H1 (cell line): ENCODE measurements at regions of chr7 and their contacts with region 1.

Region 1: DNA sequence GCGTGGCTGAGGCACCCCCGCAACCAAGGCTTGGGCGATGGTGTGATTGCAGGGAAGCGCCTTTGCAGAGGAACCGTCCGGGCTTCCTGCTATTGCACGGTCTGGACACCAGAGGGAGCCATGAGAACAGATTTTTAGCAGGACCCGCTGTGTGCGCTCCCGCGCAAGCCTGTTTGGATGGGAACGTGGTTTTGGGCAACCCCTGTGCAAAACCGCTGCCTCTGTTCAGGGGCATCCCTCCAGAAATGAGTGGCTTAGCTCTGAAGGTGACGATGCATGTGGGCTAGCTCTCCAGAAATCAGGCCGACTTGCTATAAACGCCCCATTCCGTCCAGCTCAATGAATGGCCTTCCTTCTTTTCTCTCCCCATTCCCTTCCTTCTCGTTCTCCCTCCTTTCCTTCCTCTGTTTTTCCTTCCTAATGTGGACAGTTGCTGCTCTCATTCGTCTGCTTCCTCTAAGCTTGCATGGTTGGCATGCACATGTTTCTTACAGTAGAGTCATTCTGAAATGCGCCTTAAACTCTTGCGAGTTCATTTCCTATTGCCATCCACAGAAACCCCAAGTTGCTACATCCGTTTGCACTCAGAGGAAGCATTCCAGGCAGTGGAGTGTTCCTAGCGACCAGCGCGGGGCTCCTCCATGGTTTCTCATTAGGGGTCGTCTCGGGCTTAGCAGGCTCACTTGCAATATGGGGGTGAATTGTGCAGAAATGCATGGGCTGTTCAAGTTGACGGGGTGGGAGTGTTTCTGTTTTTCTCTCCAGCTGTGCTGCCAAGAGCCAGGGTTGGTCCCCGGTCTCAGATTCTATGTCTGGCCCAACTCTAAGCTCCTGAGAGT is 302.5 kb upstream of the GALNT17 start:
- DNase-seq: peak; percentile 70 to 93
- H3K4me3 ChIP-seq: no peak overlapping the region
- H3K27ac ChIP-seq: no peak overlapping the region
- H3K4me1 ChIP-seq: peaks cover 0 to 7% (median 4%) of the 10 kb centered on the region in 4 experiments; a peak in 5 of 7 replicates
- H3K27me3 ChIP-seq: no peaks in the 10 kb centered on the region
- CTCF ChIP-seq: peak; percentile 82 to 96 (median 87)
- EP300 ChIP-seq: no peak
- POLR2A ChIP-seq: 0 out of 3 replicates have a peak, but pooled peaks of 1 of the 2 experiments have one; percentile 30
- RAD21 ChIP-seq: peak; percentile 97 to 98

Region 2: DNA sequence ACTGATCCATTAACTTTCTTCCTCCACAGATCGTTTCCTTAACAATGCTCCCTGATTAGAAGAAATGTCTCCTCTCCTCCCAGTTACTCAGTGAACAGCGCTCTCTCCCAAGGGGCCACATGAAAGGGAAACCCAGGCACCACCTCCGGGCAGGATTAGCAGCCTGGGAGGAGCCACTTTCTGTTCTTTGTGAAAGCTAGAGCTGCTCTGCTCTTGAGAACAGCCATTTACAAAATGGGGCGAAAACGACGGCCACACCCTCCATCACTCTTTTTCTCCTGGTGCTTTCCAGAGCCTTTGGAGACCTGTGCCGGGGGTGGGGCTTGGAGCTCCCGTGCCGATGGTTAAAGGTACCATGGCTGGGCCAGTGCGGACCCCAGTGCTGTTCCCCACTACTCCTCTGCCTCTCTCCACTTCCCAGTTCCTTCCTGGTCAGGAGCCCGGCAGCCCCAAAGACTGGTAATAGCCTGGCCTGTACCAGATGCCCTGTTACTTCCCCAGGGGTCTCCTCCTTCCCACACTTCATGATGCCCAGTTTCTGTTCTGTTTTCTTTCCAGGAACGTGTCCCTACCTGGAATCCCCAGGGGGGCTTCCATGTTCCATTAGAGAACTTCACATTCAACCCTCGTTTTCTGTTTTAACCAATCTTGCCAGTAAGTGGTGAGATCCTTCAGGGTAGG is 100.4 kb before region 1 on chr7:
- CTCF ChIA-PET with region 1: no interaction called
- POLR2A ChIA-PET with region 1: no interaction called
- DNase-seq: peak; percentile 61 to 71
- H3K4me3 ChIP-seq: peak overlapping the region in 2 of 4 experiments; percentile 15 to 16; a peak in 3 of 8 replicates
- H3K27ac ChIP-seq: peak overlapping the region; percentile 39; the same call in 1 of the 2 replicates
- H3K4me1 ChIP-seq: peaks cover 6 to 32% (median 27%) of the 10 kb centered on the region in 4 experiments
- H3K27me3 ChIP-seq: no peaks in the 10 kb centered on the region
- CTCF ChIP-seq: no peak
- EP300 ChIP-seq: peak; percentile 16 to 37; a peak in 2 of 3 replicates
- POLR2A ChIP-seq: peak in 1 of 2 experiments; percentile 35; a peak in 1 of 3 replicates
- RAD21 ChIP-seq: no peak

Region 3: DNA sequence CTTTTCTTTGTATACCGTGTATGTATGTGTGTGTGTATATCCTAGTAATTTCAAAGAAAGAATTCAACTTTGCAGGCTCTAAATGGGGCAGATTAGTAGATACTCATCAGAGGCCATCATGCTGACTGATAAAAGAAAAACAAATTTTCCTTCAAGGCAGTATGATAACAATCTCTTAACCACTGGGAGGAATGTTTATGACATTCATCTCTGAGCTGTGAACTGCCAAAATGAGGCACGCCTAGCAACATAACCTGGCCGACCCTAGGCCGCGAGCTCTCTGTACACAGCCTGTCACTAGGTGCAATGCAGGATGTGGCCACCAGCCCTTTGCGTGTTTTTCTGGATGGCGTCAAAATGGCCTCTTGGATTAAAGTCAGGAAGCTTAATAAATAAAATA is 41.2 kb before region 1 on chr7:
- CTCF ChIA-PET with region 1: no interaction called
- POLR2A ChIA-PET with region 1: no interaction called
- DNase-seq: no peak
- H3K4me3 ChIP-seq: no peak overlapping the region
- H3K27ac ChIP-seq: no peak overlapping the region
- H3K4me1 ChIP-seq: no peaks in the 10 kb centered on the region; a peak in 1 of 7 replicates
- H3K27me3 ChIP-seq: no peaks in the 10 kb centered on the region
- CTCF ChIP-seq: peak in 1 of 3 experiments; percentile 23; a peak in 1 of 4 replicates
- EP300 ChIP-seq: no peak
- POLR2A ChIP-seq: no peak
- RAD21 ChIP-seq: no peak

Region 4: DNA sequence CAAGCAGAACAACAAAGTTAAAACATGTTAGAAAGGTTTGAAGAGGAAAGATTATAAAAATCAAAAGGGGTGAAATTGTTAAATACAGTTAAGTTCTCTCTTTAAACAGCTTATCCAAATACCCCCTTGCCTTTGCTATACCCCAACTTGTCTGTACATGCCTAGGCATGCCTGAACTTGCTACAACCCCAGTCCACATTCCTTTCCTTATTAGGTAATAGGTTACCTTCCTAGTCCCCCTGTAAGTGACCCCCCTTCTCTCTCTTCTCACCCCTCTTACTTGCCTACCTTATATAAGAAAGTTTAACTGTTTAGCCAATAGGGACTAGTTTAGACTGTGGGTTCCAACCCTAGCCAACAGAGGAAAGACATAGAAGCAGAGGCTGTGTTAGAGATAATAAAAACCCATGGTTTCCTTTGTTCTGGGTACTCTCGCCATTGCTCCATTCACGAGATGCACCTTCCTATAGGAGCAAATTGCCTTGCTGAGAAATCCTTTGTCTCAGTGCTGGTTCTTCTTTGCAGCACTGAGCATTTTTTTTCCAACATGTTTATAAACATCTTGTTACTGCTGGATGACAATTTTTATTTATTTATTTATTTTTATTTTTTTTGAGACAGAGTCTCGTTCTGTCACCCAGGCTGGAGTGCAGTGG is 20.3 kb after region 1 on chr7:
- CTCF ChIA-PET with region 1: interaction called, 18 read pairs
- POLR2A ChIA-PET with region 1: no interaction called
- DNase-seq: no peak
- H3K4me3 ChIP-seq: no peak overlapping the region
- H3K27ac ChIP-seq: peak overlapping the region; percentile 91
- H3K4me1 ChIP-seq: peaks cover 0 to 4% (median under 1%) of the 10 kb centered on the region in 4 experiments; a peak in 3 of 7 replicates
- H3K27me3 ChIP-seq: no peaks in the 10 kb centered on the region
- CTCF ChIP-seq: no peak
- EP300 ChIP-seq: peak in 1 of 2 experiments; percentile 95; a peak in 1 of 3 replicates
- POLR2A ChIP-seq: peak in 1 of 2 experiments; percentile 63; a peak in 2 of 3 replicates
- RAD21 ChIP-seq: no peak

Region 5: DNA sequence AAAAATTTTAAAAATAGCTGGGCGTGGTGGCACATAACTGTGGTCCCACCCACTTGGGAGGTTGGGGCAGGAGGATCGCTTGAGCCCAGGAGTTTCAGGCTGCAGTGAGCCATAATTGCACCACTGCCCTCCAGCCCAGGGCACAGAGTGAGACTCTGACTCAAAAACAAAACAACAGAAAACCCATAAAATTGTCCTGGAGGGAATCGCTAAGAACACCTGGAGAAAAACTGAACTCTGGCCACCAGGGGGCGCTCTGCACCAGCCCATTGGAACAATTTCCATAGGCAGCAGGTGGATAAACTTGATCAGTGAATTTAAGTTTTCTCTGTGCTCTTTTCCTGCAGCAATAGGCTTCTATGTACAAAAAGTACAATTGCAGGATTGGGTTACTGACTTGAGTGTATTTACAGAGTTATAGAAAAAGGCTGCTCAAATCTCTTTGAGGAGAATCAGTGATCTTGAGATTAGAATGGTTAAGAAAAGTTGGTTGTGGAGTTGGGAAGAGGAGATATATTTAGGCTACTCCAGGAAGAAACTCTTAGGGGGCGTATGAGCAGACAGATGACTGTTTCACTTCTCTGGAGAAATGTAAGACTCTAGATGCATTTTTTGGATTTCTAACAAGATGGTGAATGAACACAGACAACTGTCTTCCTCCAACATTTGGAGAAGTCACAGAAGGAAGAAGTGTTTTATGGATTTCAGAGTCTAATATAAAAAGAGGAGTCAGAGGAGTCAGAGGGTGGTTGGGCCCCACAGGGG is 27.6 kb after region 1 on chr7:
- CTCF ChIA-PET with region 1: interaction called, 11 read pairs
- POLR2A ChIA-PET with region 1: no interaction called
- DNase-seq: peak; percentile 79 to 98
- H3K4me3 ChIP-seq: peak overlapping the region in 1 of 4 experiments; percentile 33; a peak in 1 of 8 replicates
- H3K27ac ChIP-seq: no peak overlapping the region; the same call in 1 of the 2 replicates
- H3K4me1 ChIP-seq: peaks cover 0 to 9% (median 3%) of the 10 kb centered on the region in 4 experiments; a peak in 4 of 7 replicates
- H3K27me3 ChIP-seq: no peaks in the 10 kb centered on the region
- CTCF ChIP-seq: peak; percentile 63 to 78 (median 73)
- EP300 ChIP-seq: no peak
- POLR2A ChIP-seq: no peak
- RAD21 ChIP-seq: peak; percentile 99 to 100

Region 6: GRCh38 chr7:71511361-71511807 is 681.9 kb after region 1 on chr7:
- CTCF ChIA-PET with region 1: interaction called, 15 read pairs
- POLR2A ChIA-PET with region 1: no interaction called
- DNase-seq: peak; percentile 15 to 51
- H3K4me3 ChIP-seq: no peak overlapping the region
- H3K27ac ChIP-seq: no peak overlapping the region
- H3K4me1 ChIP-seq: peaks cover 2 to 7% (median 6%) of the 10 kb centered on the region in 4 experiments; a peak in 5 of 7 replicates
- H3K27me3 ChIP-seq: no peaks in the 10 kb centered on the region
- CTCF ChIP-seq: peak; percentile 6 to 98 (median 68)
- EP300 ChIP-seq: no peak
- POLR2A ChIP-seq: no peak
- RAD21 ChIP-seq: peak; percentile 73 to 83

Region 7: DNA sequence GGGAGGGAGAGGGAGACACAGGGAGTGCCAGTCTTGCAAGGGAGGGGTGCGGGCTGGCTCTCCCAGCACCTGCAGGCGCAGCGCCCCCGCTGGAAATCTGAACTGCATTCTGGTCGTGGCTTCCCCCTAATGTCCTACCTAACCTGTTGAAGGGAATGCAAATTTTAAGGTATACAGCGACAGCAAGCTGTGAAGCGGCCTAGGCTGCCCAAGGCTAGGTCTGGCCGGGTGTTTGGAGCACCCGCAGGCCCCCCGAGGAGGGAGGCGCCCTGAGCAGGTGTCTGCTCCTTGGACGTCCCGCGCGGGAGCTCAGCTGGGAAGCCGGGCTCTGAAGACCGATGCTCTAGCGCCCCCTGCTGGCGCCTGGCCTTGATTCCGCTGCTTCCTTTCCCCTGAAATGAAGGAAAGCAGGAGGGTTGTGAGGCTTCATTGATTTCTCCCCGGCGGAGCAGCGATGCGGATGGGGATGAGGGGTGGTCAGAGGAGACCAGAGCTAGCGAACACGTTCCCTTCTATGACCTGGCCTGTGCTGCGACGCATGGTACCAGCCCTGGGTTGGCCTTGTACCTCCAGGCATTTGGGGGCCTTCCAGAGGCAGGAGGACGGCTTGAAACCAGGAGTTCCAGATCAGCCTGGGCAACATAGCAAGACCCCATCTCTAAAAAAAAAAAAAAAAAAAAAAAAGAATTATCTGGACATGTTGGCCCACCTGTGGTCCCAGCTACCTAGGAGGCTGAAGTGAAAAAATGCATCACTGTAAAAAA is 903.8 kb after region 1 on chr7:
- CTCF ChIA-PET with region 1: interaction called, 40 read pairs
- POLR2A ChIA-PET with region 1: no interaction called
- DNase-seq: peak; percentile 87 to 99
- H3K4me3 ChIP-seq: peak overlapping the region in 3 of 4 experiments; percentile 34 to 57 (median 53); a peak in 7 of 8 replicates
- H3K27ac ChIP-seq: no peak overlapping the region
- H3K4me1 ChIP-seq: peaks cover 0 to 4% (median 1%) of the 10 kb centered on the region in 4 experiments; a peak in 4 of 7 replicates
- H3K27me3 ChIP-seq: no peaks in the 10 kb centered on the region
- CTCF ChIP-seq: peak; percentile 83 to 85 (median 83)
- EP300 ChIP-seq: peak in 1 of 2 experiments; percentile 46; a peak in 1 of 3 replicates
- POLR2A ChIP-seq: no peak
- RAD21 ChIP-seq: peak; percentile 90 to 94

Region 8: DNA sequence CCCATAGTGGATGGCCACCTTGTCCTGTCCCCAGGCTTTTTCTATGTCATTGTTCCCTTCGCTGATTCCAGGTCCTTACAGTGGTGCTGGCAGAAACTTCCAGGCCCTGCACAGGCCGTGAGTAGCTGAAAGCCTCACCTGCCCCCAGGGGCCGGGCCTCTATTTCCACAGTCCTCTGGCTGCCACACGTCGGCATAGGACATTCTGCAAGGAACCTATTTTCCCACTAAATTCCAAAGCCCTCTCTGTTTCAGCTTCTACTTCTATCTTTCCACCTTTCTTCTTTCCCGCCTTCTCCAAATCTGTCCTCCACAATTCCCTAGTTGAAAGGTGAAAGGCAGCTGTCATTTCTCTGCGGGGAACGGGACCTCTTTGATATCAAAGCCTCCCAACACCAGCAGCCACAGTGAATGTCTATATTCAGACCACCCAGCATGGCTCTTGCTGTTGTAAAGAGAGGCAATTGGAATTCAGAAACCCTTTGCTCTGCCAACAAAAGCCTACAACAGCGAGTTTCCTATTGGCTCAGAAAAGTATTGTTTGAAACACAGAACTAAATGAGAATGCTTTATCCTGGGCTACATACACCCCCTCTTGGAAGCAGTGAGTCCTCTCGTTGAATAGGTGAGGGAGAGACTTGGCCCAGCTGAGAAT is 910.2 kb after region 1 on chr7:
- CTCF ChIA-PET with region 1: interaction called, 40 read pairs
- POLR2A ChIA-PET with region 1: no interaction called
- DNase-seq: peak; percentile 44 to 56
- H3K4me3 ChIP-seq: no peak overlapping the region
- H3K27ac ChIP-seq: no peak overlapping the region
- H3K4me1 ChIP-seq: peaks cover 4 to 13% (median 6%) of the 10 kb centered on the region in 4 experiments
- H3K27me3 ChIP-seq: no peaks in the 10 kb centered on the region
- CTCF ChIP-seq: no peak
- EP300 ChIP-seq: no peak
- POLR2A ChIP-seq: no peak
- RAD21 ChIP-seq: peak; percentile 35 to 40